ENCODE measurements at regions of chr10 and their contacts with region 1.

Region 1: GRCh38 chr10:33421789-33422462 is 87.5 kb upstream of the NRP1 start:
- DNase-seq: peak; percentile 50 to 73
- ATAC-seq: peak; percentile 82
- H3K4me3 ChIP-seq: no peak overlapping the region
- H3K27ac ChIP-seq: no peak overlapping the region
- H3K4me1 ChIP-seq: no peaks in the 10 kb centered on the region
- H3K27me3 ChIP-seq: no peaks in the 10 kb centered on the region

Region 2: DNA sequence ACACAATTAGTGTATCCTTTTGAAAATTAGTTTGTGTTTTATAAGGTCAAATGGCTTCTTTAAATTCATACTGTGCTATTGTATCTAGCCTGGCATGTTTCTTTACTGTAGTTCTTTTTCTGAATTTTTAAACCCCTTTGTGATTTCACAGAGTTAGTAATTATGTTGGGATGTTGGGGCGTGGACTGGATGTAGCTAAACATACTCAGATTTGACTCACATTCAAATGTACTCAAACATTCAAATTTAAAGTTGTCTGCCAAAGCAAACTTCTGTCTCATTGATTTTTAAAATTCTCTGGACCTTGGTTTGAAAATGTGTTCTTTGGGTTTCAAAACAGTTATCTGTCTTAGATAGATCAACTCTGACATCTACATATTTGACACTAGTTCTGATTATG is 80.3 kb before region 1 on chr10:
- intact Hi-C with region 1: loop called in 1 of 2 experiments (anchors 5 kb)
- DNase-seq: no peak
- ATAC-seq: no peak
- H3K4me3 ChIP-seq: no peak overlapping the region
- H3K27ac ChIP-seq: no peak overlapping the region
- H3K4me1 ChIP-seq: no peaks in the 10 kb centered on the region
- H3K27me3 ChIP-seq: no peaks in the 10 kb centered on the region

Region 3: GRCh38 chr10:33402220-33403073 is 19.5 kb before region 1 on chr10:
- intact Hi-C with region 1: no loop called
- DNase-seq: no peak
- ATAC-seq: no peak
- H3K4me3 ChIP-seq: no peak overlapping the region
- H3K27ac ChIP-seq: no peak overlapping the region
- H3K4me1 ChIP-seq: no peaks in the 10 kb centered on the region
- H3K27me3 ChIP-seq: no peaks in the 10 kb centered on the region

Region 4: DNA sequence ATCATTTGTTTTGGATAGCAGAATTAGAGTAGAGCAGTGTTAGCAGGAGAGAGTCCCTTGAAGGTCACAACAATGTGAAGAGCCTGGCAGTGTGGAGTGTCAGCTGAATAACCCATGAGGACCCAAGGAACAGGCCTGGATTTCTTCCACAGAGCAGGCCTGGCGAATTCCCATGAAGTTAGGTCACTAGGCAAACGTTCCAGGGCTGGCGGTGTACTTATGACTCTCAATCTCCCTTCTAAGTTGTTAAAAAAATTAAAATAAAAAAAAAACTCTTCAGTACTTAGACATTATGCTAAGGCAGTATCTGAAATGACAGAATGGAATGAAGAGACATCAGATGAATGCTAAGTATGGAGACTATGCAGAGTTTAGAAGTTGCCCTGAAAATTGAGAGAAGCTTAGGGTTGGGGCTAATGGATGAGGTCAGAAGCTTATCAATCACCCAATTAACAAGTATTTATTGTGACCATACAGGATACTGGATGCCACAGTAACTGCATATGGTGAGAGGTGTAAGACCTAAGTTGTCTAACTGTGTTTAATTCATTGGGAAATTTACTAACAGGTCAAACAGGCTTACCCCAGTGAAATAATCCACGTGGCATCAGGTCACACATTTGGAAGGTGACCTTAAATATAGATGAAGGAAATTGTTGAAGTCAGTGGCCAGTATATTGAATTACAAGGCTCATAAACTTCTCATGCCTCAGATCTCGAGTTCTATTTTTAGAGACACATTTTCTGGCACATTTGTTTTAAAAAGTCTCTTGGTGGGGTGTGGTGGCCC is 38.8 kb after region 1 on chr10:
- intact Hi-C with region 1: loop called in 1 of 2 experiments (anchors 5 kb)
- DNase-seq: peak; percentile 77 to 87
- ATAC-seq: peak; percentile 76
- H3K4me3 ChIP-seq: no peak overlapping the region
- H3K27ac ChIP-seq: peak overlapping the region; percentile 51 to 93
- H3K4me1 ChIP-seq: peaks cover 4 to 10% of the 10 kb centered on the region in 2 donors
- H3K27me3 ChIP-seq: no peaks in the 10 kb centered on the region

Region 5: DNA sequence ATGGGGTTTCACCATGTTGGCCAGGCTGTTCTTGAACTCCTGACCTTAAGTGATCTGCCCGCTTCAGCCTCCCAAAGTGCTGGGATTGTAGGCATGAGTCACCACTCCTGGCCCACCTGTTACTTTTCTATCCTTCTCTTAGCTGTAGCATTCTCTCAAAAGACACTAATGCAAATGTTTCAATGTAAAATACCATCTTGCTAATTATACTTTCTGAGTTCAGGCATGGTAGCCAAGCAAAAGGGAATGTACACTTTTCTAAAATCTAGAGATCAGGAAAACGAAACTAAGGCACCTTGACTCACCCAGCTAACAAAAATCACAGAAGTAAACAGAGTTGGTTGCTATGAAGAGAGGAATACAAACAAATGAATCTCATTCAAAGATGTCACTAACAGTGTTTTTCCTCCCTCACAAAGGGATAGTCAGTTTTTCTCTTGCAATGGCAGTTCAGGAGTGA is 313.6 kb after region 1 on chr10:
- intact Hi-C with region 1: no loop called
- DNase-seq: no peak
- ATAC-seq: no peak
- H3K4me3 ChIP-seq: no peak overlapping the region
- H3K27ac ChIP-seq: no peak overlapping the region
- H3K4me1 ChIP-seq: no peaks in the 10 kb centered on the region
- H3K27me3 ChIP-seq: no peaks in the 10 kb centered on the region